ENCODE measurements at regions of chr2 and their contacts with region 1.

Region 1: GRCh38 chr2:63888490-63889402 is 47.0 kb downstream of the UGP2 start:
- DNase-seq: peak; percentile 63
- H3K4me3 Mint-ChIP-seq: no peak overlapping the region
- H3K27ac Mint-ChIP-seq: peak overlapping the region; percentile 70
- H3K4me1 Mint-ChIP-seq: peaks cover 5% of the 10 kb centered on the region
- H3K27me3 Mint-ChIP-seq: no peaks in the 10 kb centered on the region

Region 2: GRCh38 chr2:63692002-63692606 is 196.6 kb before region 1 on chr2:
- CTCF ChIA-PET with region 1: interaction called, 6 read pairs
- POLR2A ChIA-PET with region 1: no interaction called
- intact Hi-C with region 1: loop called (anchors 1 kb)
- DNase-seq: no peak
- H3K4me3 Mint-ChIP-seq: no peak overlapping the region
- H3K27ac Mint-ChIP-seq: no peak overlapping the region
- H3K4me1 Mint-ChIP-seq: no peaks in the 10 kb centered on the region
- H3K27me3 Mint-ChIP-seq: no peaks in the 10 kb centered on the region

Region 3: GRCh38 chr2:63698825-63699548 is 189.8 kb before region 1 on chr2:
- CTCF ChIA-PET with region 1: interaction called, 11 read pairs
- POLR2A ChIA-PET with region 1: no interaction called
- intact Hi-C with region 1: loop called (anchors 1 kb)
- DNase-seq: no peak
- H3K4me3 Mint-ChIP-seq: no peak overlapping the region
- H3K27ac Mint-ChIP-seq: no peak overlapping the region
- H3K4me1 Mint-ChIP-seq: no peaks in the 10 kb centered on the region
- H3K27me3 Mint-ChIP-seq: no peaks in the 10 kb centered on the region

Region 4: GRCh38 chr2:63801455-63801854 is 87.3 kb before region 1 on chr2:
- CTCF ChIA-PET with region 1: no interaction called
- POLR2A ChIA-PET with region 1: no interaction called
- intact Hi-C with region 1: no loop called
- DNase-seq: no peak
- H3K4me3 Mint-ChIP-seq: no peak overlapping the region
- H3K27ac Mint-ChIP-seq: no peak overlapping the region
- H3K4me1 Mint-ChIP-seq: no peaks in the 10 kb centered on the region
- H3K27me3 Mint-ChIP-seq: no peaks in the 10 kb centered on the region

Region 5: GRCh38 chr2:63914311-63914710 is 25.6 kb after region 1 on chr2:
- CTCF ChIA-PET with region 1: no interaction called
- POLR2A ChIA-PET with region 1: no interaction called
- intact Hi-C with region 1: no loop called
- DNase-seq: no peak
- H3K4me3 Mint-ChIP-seq: no peak overlapping the region
- H3K27ac Mint-ChIP-seq: no peak overlapping the region
- H3K4me1 Mint-ChIP-seq: no peaks in the 10 kb centered on the region
- H3K27me3 Mint-ChIP-seq: no peaks in the 10 kb centered on the region